Prostate gland (tissue), 2 donors: ENCODE measurements at regions of chr16 and their contacts with region 1.

Region 1: GRCh38 chr16:4288148-4288921 is 15.5 kb upstream of the TFAP4 start:
- DNase-seq: peak; percentile 70
- H3K4me3 ChIP-seq: no peak overlapping the region
- H3K27ac ChIP-seq: no peak overlapping the region
- H3K4me1 ChIP-seq: no peaks in the 10 kb centered on the region
- H3K27me3 ChIP-seq: no peaks in the 10 kb centered on the region
- CTCF ChIP-seq: peak; percentile 83 to 92 (median 86)
- POLR2A ChIP-seq: no peak

Region 2: GRCh38 chr16:3158471-3159314 is 1129.6 kb before region 1 on chr16:
- intact Hi-C with region 1: no loop called
- DNase-seq: peak; percentile 89
- H3K4me3 ChIP-seq: peak overlapping the region; percentile 56 to 59
- H3K27ac ChIP-seq: peak overlapping the region; percentile 83 to 90
- H3K4me1 ChIP-seq: no peaks in the 10 kb centered on the region
- H3K27me3 ChIP-seq: no peaks in the 10 kb centered on the region
- CTCF ChIP-seq: no peak
- POLR2A ChIP-seq: peak; percentile 77

Region 3: DNA sequence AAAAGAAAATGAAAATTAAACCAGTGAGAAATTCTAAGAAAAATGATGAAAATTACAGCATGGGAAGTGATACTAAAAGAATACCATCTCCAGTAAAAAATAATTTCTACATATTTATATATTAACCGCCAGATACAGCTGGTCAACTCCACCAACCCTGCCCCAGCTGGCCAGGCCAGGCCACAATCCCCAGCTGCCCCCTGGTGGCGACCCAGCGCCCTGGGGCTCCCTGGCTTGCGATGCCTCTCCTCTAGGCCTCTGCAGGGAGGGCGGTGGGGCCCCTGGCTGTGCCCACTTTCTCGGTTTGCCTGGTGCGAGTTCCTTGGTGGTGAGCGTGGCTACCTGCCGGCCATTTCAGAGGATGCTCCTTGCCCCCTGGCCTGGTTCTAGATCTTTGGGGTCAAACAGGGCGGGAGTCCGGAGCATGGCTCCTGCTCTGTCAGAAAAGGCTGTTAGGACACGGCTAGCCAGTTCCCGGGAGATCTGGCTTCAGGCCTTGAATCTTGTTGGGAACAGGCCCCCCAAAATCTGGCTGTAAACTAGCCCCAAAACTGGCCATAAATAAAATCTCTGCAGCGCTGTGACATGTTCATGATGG is 42.0 kb after region 1 on chr16:
- intact Hi-C with region 1: loop called (anchors 2 kb)
- DNase-seq: peak; percentile 69
- H3K4me3 ChIP-seq: no peak overlapping the region
- H3K27ac ChIP-seq: no peak overlapping the region
- H3K4me1 ChIP-seq: peaks cover 3% of the 10 kb centered on the region
- H3K27me3 ChIP-seq: no peaks in the 10 kb centered on the region
- CTCF ChIP-seq: peak; percentile 82 to 95 (median 93)
- POLR2A ChIP-seq: no peak

Region 4: DNA sequence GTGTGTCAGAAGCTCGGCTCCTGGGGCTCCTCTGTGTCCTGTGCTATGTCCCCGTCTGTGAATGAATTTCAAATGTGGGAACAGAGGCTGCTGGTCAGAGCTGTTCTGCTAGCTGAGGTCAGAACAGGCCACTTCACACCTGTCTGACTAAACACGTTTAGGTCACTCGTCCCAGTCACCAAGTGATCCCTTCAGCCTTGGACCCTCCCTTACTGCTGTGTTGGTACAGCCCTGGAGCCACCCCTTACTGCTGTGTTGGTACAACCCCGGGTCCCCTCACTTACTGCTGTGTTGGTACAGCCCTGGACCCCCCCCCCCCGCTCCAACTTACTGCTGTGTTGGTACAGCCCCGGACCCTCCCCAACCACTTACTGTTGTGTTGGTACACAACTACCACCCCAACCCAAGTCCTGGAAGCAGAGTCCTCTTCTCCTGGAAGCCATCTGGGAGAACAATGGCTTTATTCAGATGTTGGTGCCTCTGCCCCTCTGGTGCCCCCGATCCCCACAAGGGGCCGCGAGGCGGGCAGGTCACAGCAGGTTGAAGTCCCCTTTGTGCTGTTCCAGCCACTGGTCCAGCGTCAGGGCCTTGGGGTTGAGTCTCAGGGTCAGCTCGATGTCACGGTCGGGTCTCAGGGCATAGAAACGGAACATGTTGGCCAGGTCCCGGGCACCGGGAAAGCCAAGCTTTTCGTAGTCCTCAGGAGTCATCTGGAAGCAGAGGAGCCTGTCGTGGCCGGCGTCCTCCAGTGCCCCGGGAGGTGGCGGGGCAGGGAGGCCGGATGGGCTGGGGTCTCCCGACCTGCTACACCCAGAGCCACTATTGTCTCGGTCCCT is 173.1 kb after region 1 on chr16:
- intact Hi-C with region 1: no loop called
- DNase-seq: no peak
- H3K4me3 ChIP-seq: no peak overlapping the region
- H3K27ac ChIP-seq: no peak overlapping the region
- H3K4me1 ChIP-seq: no peaks in the 10 kb centered on the region
- H3K27me3 ChIP-seq: no peaks in the 10 kb centered on the region
- CTCF ChIP-seq: no peak
- POLR2A ChIP-seq: no peak